ENCODE measurements at regions of chr17 and their contacts with region 1.

Region 1: GRCh38 chr17:75764711-75765421 is at the start of gene GALK1:
- DNase-seq: peak; percentile 66 to 81 (median 68)
- H3K4me3 ChIP-seq: peak within 1 kb of the TSS; percentile 64
- H3K4me3 Mint-ChIP-seq: peak within 1 kb of the TSS; percentile 65 to 90 (median 74)
- H3K27ac ChIP-seq: peak within 1 kb of the TSS; percentile 61
- H3K27ac Mint-ChIP-seq: peak within 1 kb of the TSS; percentile 23 to 92 (median 64)
- H3K4me1 ChIP-seq: peaks cover 13% of the 10 kb centered on the region
- H3K4me1 Mint-ChIP-seq: peaks cover 9 to 27% (median 12%) of the 10 kb centered on the region in 3 donors
- H3K27me3 ChIP-seq: no peaks in the 10 kb centered on the region
- H3K27me3 Mint-ChIP-seq: no peaks in the 10 kb centered on the region
- total RNA-seq, gene GALK1: 33.2 to 39.7 TPM

Region 2: GRCh38 chr17:75779231-75779986 is 14.5 kb after region 1 on chr17:
- CTCF ChIA-PET with region 1: interaction called, 47 read pairs
- POLR2A ChIA-PET with region 1: interaction called, 79 read pairs
- DNase-seq: peak; percentile 84 to 98 (median 95)
- H3K4me3 ChIP-seq: peak overlapping the region; percentile 86
- H3K4me3 Mint-ChIP-seq: peak overlapping the region; percentile 93 to 100 (median 98)
- H3K27ac ChIP-seq: peak overlapping the region; percentile 97
- H3K27ac Mint-ChIP-seq: peak overlapping the region; percentile 93 to 100 (median 98)
- H3K4me1 ChIP-seq: peaks cover 40% of the 10 kb centered on the region
- H3K4me1 Mint-ChIP-seq: peaks cover 51 to 69% (median 59%) of the 10 kb centered on the region in 3 donors
- H3K27me3 ChIP-seq: no peaks in the 10 kb centered on the region
- H3K27me3 Mint-ChIP-seq: peaks cover 0 to 16% of the 10 kb centered on the region in 2 donors

Region 3: DNA sequence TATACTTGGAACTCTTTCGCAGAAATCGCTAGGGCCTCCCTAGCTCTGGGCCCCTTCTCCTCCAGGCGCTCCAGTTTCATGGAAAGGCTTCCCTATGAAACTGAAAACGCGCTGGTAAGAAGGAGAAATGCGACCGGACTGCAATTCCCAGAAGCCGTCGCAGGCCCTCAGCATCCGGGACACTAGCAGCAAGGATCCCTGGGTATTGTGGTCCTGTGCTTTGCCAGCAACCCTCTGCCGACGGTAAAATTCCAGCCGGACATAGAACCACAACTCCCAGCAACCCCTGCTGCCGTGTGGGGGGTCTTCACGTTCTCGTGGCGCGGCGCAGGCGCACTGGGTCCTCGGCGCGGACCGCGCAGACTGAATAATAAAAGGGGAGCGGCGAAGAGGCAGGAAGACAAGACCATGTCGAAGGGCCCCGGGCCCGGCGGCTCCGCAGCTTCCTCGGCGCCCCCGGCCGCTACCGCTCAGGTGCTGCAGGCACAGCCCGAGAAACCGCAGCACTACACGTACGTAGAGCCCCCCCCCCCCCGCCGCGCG is 19.7 kb after region 1 on chr17 and contains the start of gene UNK:
- CTCF ChIA-PET with region 1: interaction called, 13 read pairs
- POLR2A ChIA-PET with region 1: interaction called, 79 read pairs
- DNase-seq: peak; percentile 89 to 98 (median 97)
- H3K4me3 ChIP-seq: peak within 1 kb of the TSS; percentile 67
- H3K4me3 Mint-ChIP-seq: peak within 1 kb of the TSS; percentile 93 to 97 (median 93)
- H3K27ac ChIP-seq: peak within 1 kb of the TSS; percentile 98
- H3K27ac Mint-ChIP-seq: peak within 1 kb of the TSS; percentile 99 to 100 (median 100)
- H3K4me1 ChIP-seq: peaks cover 46% of the 10 kb centered on the region
- H3K4me1 Mint-ChIP-seq: peaks cover 39 to 70% (median 51%) of the 10 kb centered on the region in 3 donors
- H3K27me3 ChIP-seq: no peaks in the 10 kb centered on the region
- H3K27me3 Mint-ChIP-seq: peaks cover 0 to 6% of the 10 kb centered on the region in 2 donors
- total RNA-seq, gene UNK: 24.4 to 29.3 TPM

Region 4: GRCh38 chr17:75827252-75828115 is 62.6 kb after region 1 on chr17:
- CTCF ChIA-PET with region 1: interaction called, 13 read pairs
- POLR2A ChIA-PET with region 1: no interaction called
- DNase-seq: peak; percentile 58 to 83 (median 72)
- H3K4me3 ChIP-seq: peak overlapping the region; percentile 26
- H3K4me3 Mint-ChIP-seq: peak overlapping the region; percentile 62 to 85 (median 65)
- H3K27ac ChIP-seq: peak overlapping the region; percentile 57
- H3K27ac Mint-ChIP-seq: peak overlapping the region; percentile 61 to 100 (median 94)
- H3K4me1 ChIP-seq: peaks cover 17% of the 10 kb centered on the region
- H3K4me1 Mint-ChIP-seq: peaks cover 15 to 22% (median 19%) of the 10 kb centered on the region in 3 donors
- H3K27me3 ChIP-seq: no peaks in the 10 kb centered on the region
- H3K27me3 Mint-ChIP-seq: no peaks in the 10 kb centered on the region

Region 5: DNA sequence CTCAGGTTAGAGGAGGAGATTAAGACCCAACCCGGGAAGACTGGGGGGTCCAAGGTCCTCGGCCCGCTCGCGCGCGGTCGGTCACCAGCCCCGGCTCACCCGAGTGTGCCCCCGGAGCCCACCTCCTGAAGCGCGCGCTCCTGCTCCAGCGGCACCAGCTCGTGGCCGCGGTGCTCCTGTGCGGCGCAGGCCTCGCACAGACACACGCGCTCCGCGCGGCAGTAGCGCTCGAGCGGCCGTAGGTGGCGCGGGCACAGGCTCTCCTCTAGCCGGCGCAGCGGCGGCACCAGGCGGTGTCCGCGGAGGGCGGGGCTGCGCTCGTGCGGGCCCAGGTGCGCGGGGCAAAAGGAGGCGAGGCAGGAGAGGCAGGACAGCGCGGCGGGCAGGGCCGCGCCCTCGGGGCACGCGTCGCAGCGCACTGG is 112.9 kb after region 1 on chr17:
- CTCF ChIA-PET with region 1: interaction called, 15 read pairs
- POLR2A ChIA-PET with region 1: no interaction called
- DNase-seq: peak; percentile 49 to 79 (median 67)
- H3K4me3 ChIP-seq: peak overlapping the region; percentile 61
- H3K4me3 Mint-ChIP-seq: peak overlapping the region; percentile 83 to 90 (median 86)
- H3K27ac ChIP-seq: peak overlapping the region; percentile 43
- H3K27ac Mint-ChIP-seq: peak overlapping the region; percentile 76 to 96 (median 87)
- H3K4me1 ChIP-seq: peaks cover 40% of the 10 kb centered on the region
- H3K4me1 Mint-ChIP-seq: peaks cover 35 to 59% (median 39%) of the 10 kb centered on the region in 3 donors
- H3K27me3 ChIP-seq: no peaks in the 10 kb centered on the region
- H3K27me3 Mint-ChIP-seq: peaks cover 0 to 5% of the 10 kb centered on the region in 2 donors